ENCODE measurements at regions of chr20 and their contacts with region 1.

Region 1: DNA sequence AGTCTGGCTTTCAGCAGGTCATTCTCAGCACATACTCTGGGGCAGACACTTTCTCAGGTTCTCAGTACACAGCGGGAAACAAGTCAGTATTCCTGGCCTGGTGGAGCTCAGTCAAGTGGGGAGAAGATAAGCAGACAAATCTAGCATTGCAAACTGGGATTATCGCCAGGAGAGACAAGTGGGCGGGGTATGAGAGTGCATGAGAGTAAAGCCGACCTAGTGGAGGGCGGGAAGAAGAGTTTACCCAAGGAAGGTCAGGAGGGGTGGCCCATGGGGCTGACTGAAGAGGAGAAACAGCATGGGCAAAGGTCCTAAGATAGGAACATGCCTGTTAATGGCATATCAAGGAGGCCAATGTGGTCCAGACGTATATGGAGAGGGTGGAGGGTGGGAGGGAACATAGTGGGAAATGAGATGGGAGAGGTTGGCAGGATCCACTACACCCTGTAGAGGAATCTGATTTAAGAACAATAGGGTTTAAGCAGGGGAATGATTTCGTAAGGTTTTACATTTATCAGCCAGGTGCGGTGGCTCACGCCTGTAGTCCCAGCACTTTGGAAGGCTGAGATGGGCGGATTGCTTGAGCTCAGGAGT is 12.4 kb upstream of the CSNK2A1 start:
- DNase-seq: peak; percentile 61
- H3K4me3 ChIP-seq: no peak overlapping the region
- H3K27ac ChIP-seq: no peak overlapping the region
- H3K4me1 ChIP-seq: no peaks in the 10 kb centered on the region
- H3K27me3 ChIP-seq: no peaks in the 10 kb centered on the region
- CTCF ChIP-seq: no peak

Region 2: GRCh38 chr20:634556-634955 is 78.5 kb after region 1 on chr20:
- intact Hi-C with region 1: no loop called
- DNase-seq: no peak
- H3K4me3 ChIP-seq: no peak overlapping the region
- H3K27ac ChIP-seq: no peak overlapping the region
- H3K4me1 ChIP-seq: no peaks in the 10 kb centered on the region
- H3K27me3 ChIP-seq: no peaks in the 10 kb centered on the region
- CTCF ChIP-seq: no peak

Region 3: DNA sequence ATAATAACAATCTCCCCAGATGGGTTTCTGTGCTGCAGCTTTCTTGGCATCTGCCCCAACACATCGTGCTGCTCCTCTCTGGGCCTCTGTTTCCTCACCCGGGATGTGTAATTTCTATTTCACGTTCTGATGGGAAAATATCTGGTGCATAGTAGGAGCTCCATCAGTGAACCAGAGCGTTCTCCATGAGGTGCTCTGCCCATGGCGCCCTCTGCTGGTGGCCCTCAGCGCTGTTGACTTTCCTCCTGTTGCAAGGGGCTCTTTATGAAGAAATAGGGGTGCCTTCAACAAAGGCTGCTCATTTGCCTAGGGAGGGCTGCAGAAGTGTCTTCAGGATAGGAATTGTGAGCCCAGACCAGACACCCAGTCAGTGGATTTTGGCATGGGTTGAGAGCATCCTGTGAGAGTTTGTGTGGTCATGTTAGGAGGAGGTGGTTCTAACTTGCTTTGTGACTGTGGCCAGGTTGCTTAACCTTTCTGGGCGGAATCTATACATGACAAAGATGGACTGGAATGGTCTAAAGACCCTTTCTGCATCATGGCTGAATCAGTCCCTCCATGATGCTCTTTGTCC is 111.4 kb after region 1 on chr20:
- intact Hi-C with region 1: loop called (anchors 5 kb)
- DNase-seq: peak; percentile 61
- H3K4me3 ChIP-seq: no peak overlapping the region
- H3K27ac ChIP-seq: no peak overlapping the region
- H3K4me1 ChIP-seq: no peaks in the 10 kb centered on the region
- H3K27me3 ChIP-seq: peaks cover 34% of the 10 kb centered on the region
- CTCF ChIP-seq: peak; percentile 82

Region 4: DNA sequence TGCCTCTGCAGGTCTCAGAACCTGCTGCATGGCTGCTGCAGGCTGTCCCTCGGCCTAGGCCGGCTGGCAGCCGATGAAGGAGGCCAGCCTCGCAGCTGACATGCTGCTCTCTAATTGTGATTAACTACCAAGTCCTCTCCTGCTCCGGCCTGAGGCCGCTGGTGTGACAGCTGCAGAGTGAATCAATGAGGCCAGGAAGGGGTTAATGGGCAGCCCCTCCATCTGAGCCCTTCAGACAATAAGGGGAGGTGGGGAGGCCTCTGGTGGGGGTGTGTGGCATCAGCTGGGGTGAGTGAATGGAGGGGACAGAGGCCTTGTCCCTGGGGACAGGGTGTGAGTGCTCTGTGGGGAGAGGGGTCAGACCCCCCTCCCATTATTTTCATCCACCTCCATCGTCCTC is 177.8 kb after region 1 on chr20:
- intact Hi-C with region 1: loop called (anchors 5 kb)
- DNase-seq: no peak
- H3K4me3 ChIP-seq: no peak overlapping the region
- H3K27ac ChIP-seq: no peak overlapping the region
- H3K4me1 ChIP-seq: no peaks in the 10 kb centered on the region
- H3K27me3 ChIP-seq: peaks cover 5% of the 10 kb centered on the region
- CTCF ChIP-seq: no peak

Measured in colonic mucosa (tissue), 4 donors.